GM18951 (cell line): ENCODE measurements at regions of chr6 and their contacts with region 1.

Region 1: GRCh38 chr6:28683944-28684538 is 158.4 kb downstream of the GPX5 start:
- POLR2A ChIP-seq: no peak

Region 2: DNA sequence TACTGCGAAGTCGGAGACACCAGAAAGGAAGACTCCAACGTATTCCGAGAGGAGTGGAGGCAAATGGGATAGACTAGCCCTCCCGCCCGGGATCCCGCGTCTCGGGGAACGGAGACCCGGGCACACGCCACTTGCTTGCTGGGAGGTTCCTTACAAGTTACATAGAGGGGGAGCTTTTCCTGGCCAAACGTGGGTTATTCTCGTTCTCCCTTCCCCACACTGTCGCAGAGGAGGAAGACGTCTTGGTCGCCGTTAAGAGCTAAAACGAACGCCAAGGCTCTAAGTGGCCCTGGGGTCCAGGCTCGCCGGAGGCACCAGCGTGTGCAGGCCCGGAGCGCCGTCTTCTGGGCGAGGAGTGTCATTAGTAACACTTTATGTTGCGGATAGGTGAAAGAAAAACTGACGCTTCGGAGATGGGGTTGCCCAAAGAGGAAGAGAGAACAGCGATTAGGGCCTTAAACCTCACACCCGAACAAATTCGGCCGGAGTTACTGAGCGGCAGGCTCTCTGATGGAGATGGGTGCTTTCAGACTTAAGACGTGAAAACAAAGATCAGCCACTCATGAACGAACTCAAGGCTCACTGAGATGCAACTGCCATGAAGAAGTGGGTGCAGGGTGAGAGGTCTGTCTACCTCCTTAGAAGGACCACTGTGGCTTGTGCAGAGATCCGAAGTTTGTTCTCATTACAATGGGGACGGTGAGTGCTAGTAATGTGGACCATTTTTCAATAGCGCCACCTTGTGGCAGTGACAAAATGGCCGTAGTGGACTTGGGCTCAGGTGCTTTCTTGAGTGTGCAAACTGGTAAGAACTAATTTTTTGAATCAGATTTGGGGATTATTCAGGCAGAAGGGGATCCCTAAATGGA is 332.8 kb after region 1 on chr6:
- in situ Hi-C with region 1: loop called (anchors 10 kb)
- POLR2A ChIP-seq: no peak

Region 3: DNA sequence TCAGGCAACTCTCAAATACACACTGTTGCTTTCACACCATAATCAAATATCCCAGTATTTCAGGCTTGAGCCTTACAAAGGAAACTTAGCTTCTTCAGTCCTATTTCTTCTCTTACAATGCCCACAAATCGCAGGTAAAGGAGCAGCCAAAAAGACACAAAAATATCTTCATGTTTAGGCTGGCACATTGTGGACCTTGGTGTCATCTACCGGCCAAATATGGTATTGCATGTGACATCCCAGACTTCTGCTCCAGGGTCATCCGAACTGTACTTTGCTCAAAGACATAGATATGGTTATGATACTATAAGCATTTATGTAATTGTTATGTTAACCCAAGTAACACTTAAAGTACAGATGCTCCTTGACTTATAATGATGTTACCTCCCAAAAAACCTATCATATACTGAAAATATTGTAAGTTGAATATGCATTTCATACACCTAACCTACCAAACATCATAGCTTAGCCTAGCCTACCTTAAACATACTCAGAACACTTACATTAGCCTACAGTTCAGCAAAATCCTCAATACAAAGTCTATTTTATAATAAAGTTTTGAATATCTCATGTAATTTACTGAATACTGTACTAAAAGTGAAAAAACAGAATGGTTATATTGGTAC is 905.5 kb after region 1 on chr6:
- in situ Hi-C with region 1: loop called (anchors 25 kb)
- POLR2A ChIP-seq: no peak